K562 (cell line): ENCODE measurements at regions of chr13 and their contacts with region 1.

Region 1: GRCh38 chr13:94816256-94816655 is 103.9 kb upstream of the SOX21 start:
- DNase-seq: no peak
- ATAC-seq: no peak
- H3K4me3 ChIP-seq: no peak overlapping the region
- H3K27ac ChIP-seq: no peak overlapping the region
- H3K4me1 ChIP-seq: no peaks in the 10 kb centered on the region
- H3K27me3 ChIP-seq: peaks cover 0 to under 1% of the 10 kb centered on the region in 2 experiments; a peak in 2 of 5 replicates
- CTCF ChIP-seq: no peak
- EP300 ChIP-seq: no peak
- POLR2A ChIP-seq: no peak
- RAD21 ChIP-seq: no peak

Region 2: DNA sequence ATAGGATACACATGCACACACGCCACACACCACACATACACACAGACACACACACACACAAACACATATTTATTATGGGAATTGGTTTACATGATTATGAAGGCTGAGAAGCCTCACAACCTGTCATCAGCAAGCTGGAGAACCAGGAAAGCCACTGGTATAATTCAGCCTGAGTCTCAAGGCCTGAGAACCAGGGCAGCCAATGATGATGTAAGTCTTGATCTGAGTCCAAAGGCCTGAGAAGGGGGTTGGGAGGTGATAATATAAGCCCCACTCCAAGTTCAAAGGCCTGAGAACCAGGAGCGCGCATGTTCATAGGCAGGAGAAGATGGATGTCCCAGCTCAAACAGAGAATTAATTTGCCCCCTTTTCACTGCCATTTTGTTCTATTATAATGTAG is 85.2 kb before region 1 on chr13:
- CTCF ChIA-PET with region 1: no interaction called
- POLR2A ChIA-PET with region 1: no interaction called
- in situ Hi-C with region 1: loop called (anchors 5 kb)
- intact Hi-C with region 1: no loop called
- DNase-seq: no peak
- ATAC-seq: no peak
- H3K4me3 ChIP-seq: no peak overlapping the region
- H3K27ac ChIP-seq: no peak overlapping the region
- H3K4me1 ChIP-seq: no peaks in the 10 kb centered on the region
- H3K27me3 ChIP-seq: no peaks in the 10 kb centered on the region
- CTCF ChIP-seq: no peak
- EP300 ChIP-seq: no peak
- POLR2A ChIP-seq: no peak
- RAD21 ChIP-seq: no peak

Region 3: GRCh38 chr13:94776956-94777355 is 39.3 kb before region 1 on chr13:
- CTCF ChIA-PET with region 1: no interaction called
- POLR2A ChIA-PET with region 1: no interaction called
- in situ Hi-C with region 1: no loop called
- intact Hi-C with region 1: no loop called
- DNase-seq: no peak
- ATAC-seq: no peak
- H3K4me3 ChIP-seq: no peak overlapping the region
- H3K27ac ChIP-seq: no peak overlapping the region
- H3K4me1 ChIP-seq: no peaks in the 10 kb centered on the region; a peak in 1 of 5 replicates
- H3K27me3 ChIP-seq: no peaks in the 10 kb centered on the region; a peak in 1 of 5 replicates
- CTCF ChIP-seq: no peak
- EP300 ChIP-seq: no peak
- POLR2A ChIP-seq: no peak
- RAD21 ChIP-seq: no peak